Motor neuron (in vitro differentiated cells): ENCODE measurements at regions of chr22 and their contacts with region 1.

Region 1: GRCh38 chr22:19325296-19325948 is 33.9 kb upstream of the CLTCL1 start:
- ATAC-seq: peak in 1 of 8 experiments; percentile 60
- H3K4me3 ChIP-seq: no peak overlapping the region
- H3K27ac ChIP-seq: no peak overlapping the region
- H3K4me1 ChIP-seq: no peaks in the 10 kb centered on the region

Region 2: GRCh38 chr22:19214078-19214473 is 111.3 kb before region 1 on chr22:
- in situ Hi-C with region 1: loop called in 1 of 9 experiments (anchors 25 kb)
- ATAC-seq: peak in 2 of 8 experiments; percentile 43 to 48
- H3K4me3 ChIP-seq: no peak overlapping the region
- H3K27ac ChIP-seq: no peak overlapping the region
- H3K4me1 ChIP-seq: peaks cover 4 to 10% of the 10 kb centered on the region in 2 donors

Region 3: DNA sequence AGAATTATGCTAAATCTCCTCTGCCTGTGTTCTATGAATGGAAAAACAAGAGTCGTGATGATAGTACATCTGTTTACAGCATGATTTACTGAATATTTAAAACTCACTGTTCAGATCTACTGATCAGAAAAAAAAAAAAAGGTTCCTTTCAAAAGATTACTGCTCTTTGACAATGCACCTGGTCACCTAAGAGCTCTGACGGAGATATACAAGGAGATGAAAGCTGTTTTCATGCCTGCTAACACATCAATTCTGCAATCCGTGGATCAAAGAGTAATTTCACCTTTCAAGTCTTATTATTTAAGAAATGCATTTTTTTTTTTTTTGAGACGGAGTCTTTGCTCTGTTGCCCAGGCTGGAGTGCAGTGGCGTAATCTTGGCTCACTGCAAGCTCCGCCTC is 64.6 kb before region 1 on chr22:
- in situ Hi-C with region 1: no loop called
- ATAC-seq: peak in 1 of 8 experiments; percentile 44
- H3K4me3 ChIP-seq: no peak overlapping the region
- H3K27ac ChIP-seq: no peak overlapping the region
- H3K4me1 ChIP-seq: no peaks in the 10 kb centered on the region

Region 4: GRCh38 chr22:19407649-19408606 is 82.5 kb after region 1 on chr22:
- in situ Hi-C with region 1: no loop called
- ATAC-seq: no peak
- H3K4me3 ChIP-seq: no peak overlapping the region
- H3K27ac ChIP-seq: no peak overlapping the region
- H3K4me1 ChIP-seq: peaks cover 0 to 4% of the 10 kb centered on the region in 2 donors

Region 5: DNA sequence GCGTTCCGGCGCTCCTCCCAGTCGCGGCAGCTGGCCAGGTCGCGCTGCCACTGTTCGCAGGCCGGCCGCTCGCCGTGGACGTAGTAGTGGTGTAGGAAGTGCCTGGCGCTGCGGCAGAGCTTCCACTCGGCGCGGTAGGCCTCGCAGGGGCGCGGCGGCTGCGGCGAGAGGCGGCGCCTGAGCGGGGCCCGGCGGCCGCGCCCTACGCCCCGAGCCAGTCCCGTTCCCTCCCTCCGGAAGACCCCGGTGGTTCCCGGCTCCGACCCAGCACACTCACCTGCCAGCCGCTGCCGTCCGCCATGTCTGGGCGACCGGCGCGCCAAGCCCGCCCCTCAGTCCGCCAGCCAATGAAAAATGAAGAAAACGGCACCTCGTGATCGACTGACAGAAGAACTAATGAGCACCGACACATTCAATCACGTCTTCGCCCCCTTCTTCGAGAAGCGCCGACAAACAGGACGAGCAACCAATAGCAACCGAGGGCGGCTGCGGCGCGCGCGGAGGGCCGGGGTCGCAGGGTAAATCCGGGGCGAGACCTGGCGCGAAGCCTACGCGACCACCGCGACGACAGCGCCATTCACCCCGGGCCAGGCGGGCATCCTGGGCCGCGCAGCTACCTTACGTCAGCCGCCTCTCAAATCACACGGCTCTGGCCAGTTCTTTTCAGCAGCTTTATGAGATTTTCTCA is 122.1 kb after region 1 on chr22 and contains the start of gene C22orf39:
- in situ Hi-C with region 1: loop called in 1 of 9 experiments (anchors 25 kb)
- ATAC-seq: peak; percentile 88 to 93 (median 90)
- H3K4me3 ChIP-seq: peak within 1 kb of the TSS; percentile 78 to 97 (median 95)
- H3K27ac ChIP-seq: peak within 1 kb of the TSS; percentile 84 to 95
- H3K4me1 ChIP-seq: peaks cover 22% of the 10 kb centered on the region in 2 donors
- total RNA-seq, gene C22orf39: 15.5 to 60.9 (median 47.9) TPM

Region 6: DNA sequence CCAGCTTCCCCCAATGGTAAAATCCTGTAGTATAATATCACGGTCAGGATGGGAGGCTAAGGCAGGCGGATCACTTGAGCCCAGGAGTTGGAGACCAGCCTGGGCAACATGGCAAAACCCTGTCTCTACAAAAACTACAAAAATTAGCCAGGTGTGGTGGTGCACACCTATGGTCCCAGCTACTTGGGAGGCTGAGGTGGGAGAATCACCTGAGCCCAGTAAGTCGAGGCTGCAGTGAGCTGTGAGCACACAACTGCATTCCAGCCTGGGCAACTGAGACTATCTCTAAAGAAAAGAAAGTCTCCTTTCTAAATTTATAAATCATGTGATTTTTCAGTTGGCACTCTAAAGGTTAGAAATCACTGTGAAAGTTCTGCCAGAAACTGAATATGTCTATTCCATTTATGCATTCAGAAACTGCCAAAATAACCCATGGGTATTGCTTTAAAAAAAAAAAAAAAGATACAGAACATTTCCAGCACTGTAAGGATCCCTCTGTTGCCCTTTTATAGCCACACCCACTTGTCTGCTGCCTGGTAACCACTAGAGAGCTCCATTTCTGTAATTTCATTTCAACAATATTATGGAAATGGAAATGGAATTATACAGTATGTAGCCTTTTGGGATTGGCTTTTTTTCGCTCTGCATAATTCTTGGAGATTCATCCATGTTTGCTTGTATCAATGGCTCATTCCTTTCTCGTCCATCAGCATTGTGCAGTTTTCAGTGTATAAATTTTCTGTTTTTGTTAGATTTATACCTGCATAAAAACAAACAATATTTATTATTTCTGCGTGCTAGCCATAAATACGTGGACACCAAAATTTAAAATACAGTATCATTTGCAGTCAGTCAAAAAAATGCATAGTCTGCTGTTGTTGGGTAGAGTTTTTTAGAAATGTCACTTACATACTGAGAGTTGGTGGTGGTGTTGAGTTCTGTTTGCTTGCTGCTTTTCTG is 163.7 kb after region 1 on chr22:
- in situ Hi-C with region 1: no loop called
- ATAC-seq: peak; percentile 53 to 98 (median 74)
- H3K4me3 ChIP-seq: no peak overlapping the region
- H3K27ac ChIP-seq: no peak overlapping the region
- H3K4me1 ChIP-seq: no peaks in the 10 kb centered on the region